CD14-positive monocyte (primary cell): ENCODE measurements at regions of chr1 and their contacts with region 1.

Region 1: DNA sequence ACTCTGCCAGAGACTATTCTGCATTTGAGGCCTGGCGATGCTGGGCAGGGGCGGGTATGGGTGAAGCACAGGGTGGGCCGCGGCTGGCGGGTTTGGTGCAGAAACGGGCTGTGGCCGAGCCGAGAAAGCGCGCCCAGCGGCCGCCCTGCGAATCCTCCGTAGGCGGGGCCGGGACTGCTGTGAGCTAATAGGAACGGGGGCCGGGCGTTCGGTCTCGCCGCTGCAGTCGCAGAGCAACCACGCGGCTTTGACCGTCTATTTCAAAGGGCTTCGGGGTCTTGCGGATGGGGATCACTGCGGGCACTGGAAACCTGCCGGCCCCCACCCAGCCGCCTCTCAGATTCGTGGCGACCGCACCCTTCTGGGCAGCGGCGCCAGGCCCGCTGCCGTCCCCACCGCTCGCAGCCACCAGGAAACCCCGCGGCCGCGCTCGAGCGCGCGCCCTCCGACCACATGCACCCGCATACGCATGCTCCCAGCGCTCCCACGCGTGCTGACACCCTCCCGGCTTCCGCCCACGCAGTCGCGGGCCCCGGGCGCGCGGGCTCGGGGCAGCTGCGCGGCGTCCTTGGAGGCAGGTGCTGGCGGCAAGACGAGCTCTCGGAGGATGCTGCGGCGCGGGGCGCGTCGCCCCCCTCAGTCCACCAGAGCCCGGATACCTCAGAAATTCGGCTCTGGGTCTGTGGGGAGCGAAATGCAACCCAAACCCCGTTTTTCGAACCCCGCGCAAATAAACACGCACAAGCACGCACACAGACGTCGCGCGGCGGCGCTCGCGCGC is 32.6 kb downstream of the DNTTIP2 start:
- DNase-seq: peak; percentile 62 to 82 (median 72)
- H3K4me3 ChIP-seq: peak overlapping the region; percentile 72 to 86 (median 73)
- H3K4me3 Mint-ChIP-seq: peak overlapping the region; percentile 94
- H3K27ac ChIP-seq: peak overlapping the region; percentile 85 to 86
- H3K27ac Mint-ChIP-seq: peak overlapping the region; percentile 87 to 92 (median 90)
- H3K4me1 ChIP-seq: peaks cover 16 to 35% of the 10 kb centered on the region in 2 donors
- H3K4me1 Mint-ChIP-seq: peaks cover 23% of the 10 kb centered on the region
- H3K27me3 ChIP-seq: no peaks in the 10 kb centered on the region
- H3K27me3 Mint-ChIP-seq: peaks cover 0 to 4% (median 2%) of the 10 kb centered on the region in 3 donors
- CTCF ChIP-seq: no peak

Region 2: DNA sequence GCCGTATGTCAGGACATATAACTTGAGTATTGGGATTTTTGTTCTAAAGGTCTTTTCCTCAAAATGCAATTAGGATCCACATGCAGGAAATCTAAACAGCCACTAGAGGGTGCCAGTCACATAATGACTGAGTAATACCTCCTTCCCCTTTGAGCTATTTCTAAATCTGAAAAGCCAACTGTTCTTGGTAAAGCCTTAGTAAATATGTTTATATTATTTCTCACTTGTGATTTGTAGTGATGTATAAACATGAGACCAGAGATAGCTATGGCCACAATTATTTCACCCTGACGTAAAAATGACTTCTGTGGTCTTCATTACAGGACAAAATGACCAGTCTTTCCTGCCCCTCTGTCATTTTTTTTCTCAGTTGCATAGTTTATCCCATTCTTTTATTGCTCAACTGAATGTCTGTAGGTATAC is 541.7 kb before region 1 on chr1:
- intact Hi-C with region 1: loop called in 1 of 2 experiments (anchors 10 kb)
- DNase-seq: peak; percentile 48 to 77 (median 65)
- H3K4me3 ChIP-seq: no peak overlapping the region
- H3K4me3 Mint-ChIP-seq: no peak overlapping the region
- H3K27ac ChIP-seq: no peak overlapping the region
- H3K27ac Mint-ChIP-seq: peak overlapping the region in 1 of 7 donors; percentile 71
- H3K4me1 ChIP-seq: no peaks in the 10 kb centered on the region
- H3K4me1 Mint-ChIP-seq: no peaks in the 10 kb centered on the region
- H3K27me3 ChIP-seq: no peaks in the 10 kb centered on the region
- H3K27me3 Mint-ChIP-seq: no peaks in the 10 kb centered on the region
- CTCF ChIP-seq: peak; percentile 84

Region 3: GRCh38 chr1:93437976-93438605 is 408.3 kb before region 1 on chr1:
- intact Hi-C with region 1: loop called in 1 of 2 experiments (anchors 10 kb)
- DNase-seq: peak; percentile 8 to 49 (median 17)
- H3K4me3 ChIP-seq: no peak overlapping the region
- H3K4me3 Mint-ChIP-seq: no peak overlapping the region
- H3K27ac ChIP-seq: no peak overlapping the region
- H3K27ac Mint-ChIP-seq: no peak overlapping the region
- H3K4me1 ChIP-seq: no peaks in the 10 kb centered on the region
- H3K4me1 Mint-ChIP-seq: no peaks in the 10 kb centered on the region
- H3K27me3 ChIP-seq: no peaks in the 10 kb centered on the region
- H3K27me3 Mint-ChIP-seq: peaks cover 0 to 2% (median 0%) of the 10 kb centered on the region in 3 donors
- CTCF ChIP-seq: peak; percentile 68

Region 4: GRCh38 chr1:93616996-93617669 is 229.3 kb before region 1 on chr1:
- intact Hi-C with region 1: no loop called
- DNase-seq: no peak
- H3K4me3 ChIP-seq: no peak overlapping the region
- H3K4me3 Mint-ChIP-seq: no peak overlapping the region
- H3K27ac ChIP-seq: no peak overlapping the region
- H3K27ac Mint-ChIP-seq: peak overlapping the region in 1 of 7 donors; percentile 30
- H3K4me1 ChIP-seq: no peaks in the 10 kb centered on the region
- H3K4me1 Mint-ChIP-seq: no peaks in the 10 kb centered on the region
- H3K27me3 ChIP-seq: no peaks in the 10 kb centered on the region
- H3K27me3 Mint-ChIP-seq: peaks cover 0 to 3% (median 2%) of the 10 kb centered on the region in 3 donors
- CTCF ChIP-seq: no peak

Region 5: DNA sequence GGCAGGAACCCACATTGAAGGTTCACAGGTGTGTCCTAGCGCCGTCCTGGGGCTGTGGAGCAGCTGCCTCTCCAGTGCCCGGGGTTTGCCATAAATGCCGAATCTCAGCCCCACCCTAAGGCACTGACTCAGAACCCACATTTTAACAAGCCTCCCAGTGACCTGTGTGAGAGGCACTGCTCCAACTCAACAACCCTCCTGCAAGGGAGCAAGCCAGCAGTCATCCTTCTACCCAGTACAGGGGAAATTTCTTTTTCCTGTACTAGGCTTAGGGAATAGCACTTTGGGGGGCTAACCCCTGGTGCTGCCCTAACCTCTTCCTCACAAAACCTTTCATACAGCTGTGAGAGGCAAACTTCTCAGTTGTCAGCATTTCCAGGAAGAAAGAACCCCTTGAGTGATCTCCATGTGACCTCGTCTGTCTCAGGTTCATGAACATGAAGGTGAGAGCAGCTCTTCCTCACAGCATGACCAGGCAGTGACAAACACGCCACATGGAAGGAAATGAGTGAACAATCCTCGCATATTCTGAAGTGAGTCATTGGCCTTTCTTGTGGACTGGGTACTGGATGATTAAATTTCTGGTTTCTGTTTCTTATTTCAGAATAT is 153.3 kb before region 1 on chr1:
- intact Hi-C with region 1: loop called in 1 of 2 experiments (anchors 5 kb)
- DNase-seq: peak; percentile 45 to 86 (median 53)
- H3K4me3 ChIP-seq: no peak overlapping the region
- H3K4me3 Mint-ChIP-seq: no peak overlapping the region
- H3K27ac ChIP-seq: no peak overlapping the region
- H3K27ac Mint-ChIP-seq: peak overlapping the region in 3 of 7 donors; percentile 66 to 86 (median 74)
- H3K4me1 ChIP-seq: peaks cover 31 to 34% of the 10 kb centered on the region in 2 donors
- H3K4me1 Mint-ChIP-seq: peaks cover 17% of the 10 kb centered on the region
- H3K27me3 ChIP-seq: no peaks in the 10 kb centered on the region
- H3K27me3 Mint-ChIP-seq: peaks cover 0 to 2% (median 2%) of the 10 kb centered on the region in 3 donors
- CTCF ChIP-seq: no peak

Region 6: DNA sequence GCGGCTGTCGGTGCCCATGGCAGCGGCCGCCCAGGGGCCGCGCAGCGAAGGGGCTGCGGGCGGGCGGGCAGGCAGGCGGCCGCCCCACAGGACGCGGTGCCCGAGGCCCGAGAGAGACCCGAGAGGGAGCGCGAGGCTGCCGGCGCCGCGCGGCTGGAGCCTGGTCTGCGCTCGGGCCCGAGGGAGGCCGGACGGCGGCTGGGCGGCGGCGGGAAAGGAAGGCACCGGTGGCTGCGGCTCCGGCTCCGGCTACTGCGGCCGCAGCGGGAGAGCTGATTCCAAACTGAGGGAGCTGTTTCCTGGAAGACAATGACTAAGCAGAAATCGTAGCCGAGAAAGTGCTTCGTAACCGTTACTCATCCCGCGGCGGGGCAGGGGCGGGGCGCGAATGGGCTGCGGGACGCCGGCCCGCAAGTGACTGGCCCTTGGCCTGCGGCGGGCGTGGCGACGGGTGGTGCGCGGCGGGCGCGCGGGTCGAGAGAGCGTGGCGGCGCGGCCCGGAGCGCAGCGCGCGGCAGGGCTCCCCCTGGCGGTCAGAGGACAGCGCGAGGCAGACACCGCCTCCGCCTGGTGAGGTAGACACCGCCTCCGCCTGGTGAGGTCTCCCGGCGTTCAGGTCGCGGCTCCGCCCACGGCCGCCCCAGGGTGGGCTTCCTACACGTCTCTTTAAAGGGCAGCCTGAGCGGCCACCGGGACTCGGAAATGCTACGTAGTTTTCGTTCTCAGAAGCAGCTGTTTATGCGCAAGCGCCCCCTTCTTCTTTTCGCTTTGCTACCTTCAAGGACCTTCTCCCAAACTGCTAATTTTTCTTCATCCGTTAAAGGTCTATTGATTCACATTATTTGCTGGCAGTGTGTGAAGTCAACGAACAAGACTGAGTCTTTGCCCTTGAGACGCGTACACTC is 63.0 kb after region 1 on chr1 and contains the start of gene GCLM:
- intact Hi-C with region 1: loop called in 1 of 2 experiments (anchors 2 kb)
- DNase-seq: peak; percentile 88 to 95 (median 92)
- H3K4me3 ChIP-seq: peak within 1 kb of the TSS; percentile 63 to 86 (median 78)
- H3K4me3 Mint-ChIP-seq: peak within 1 kb of the TSS; percentile 91 to 94
- H3K27ac ChIP-seq: peak within 1 kb of the TSS; percentile 52 to 56
- H3K27ac Mint-ChIP-seq: peak within 1 kb of the TSS; percentile 65 to 92 (median 84)
- H3K4me1 ChIP-seq: peaks cover 12 to 28% of the 10 kb centered on the region in 2 donors
- H3K4me1 Mint-ChIP-seq: peaks cover 22% of the 10 kb centered on the region
- H3K27me3 ChIP-seq: no peaks in the 10 kb centered on the region
- H3K27me3 Mint-ChIP-seq: peaks cover 5 to 11% (median 9%) of the 10 kb centered on the region in 3 donors
- CTCF ChIP-seq: peak; percentile 97
- polyA plus RNA-seq, gene GCLM: 1.2 to 4.4 (median 3.2) TPM